ENCODE measurements at regions of chr15 and their contacts with region 1.

Region 1: DNA sequence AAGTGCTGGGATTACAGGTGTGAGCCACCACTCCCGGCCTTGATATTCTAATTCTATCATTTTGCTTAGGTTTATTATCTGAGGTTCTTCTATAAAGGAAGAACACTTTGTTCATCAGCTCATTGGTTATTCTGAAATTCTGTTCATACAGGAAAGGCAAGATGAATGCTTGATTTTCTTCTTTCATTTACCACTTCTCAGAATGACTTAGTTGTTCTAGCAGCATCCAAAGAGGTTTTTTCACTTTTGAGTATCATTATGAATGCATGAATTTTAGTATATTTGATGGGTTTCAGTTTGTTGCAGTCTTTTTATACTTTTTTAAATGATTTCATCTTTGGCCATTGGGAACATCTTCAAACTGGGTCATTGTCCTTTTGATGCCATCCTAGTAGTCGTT is 51.8 kb downstream of the RNF111 start:
- DNase-seq: no peak
- ATAC-seq: no peak
- H3K4me3 ChIP-seq: no peak overlapping the region
- H3K4me3 Mint-ChIP-seq: peak overlapping the region in 6 of 10 donors; percentile 7 to 56 (median 42)
- H3K27ac ChIP-seq: no peak overlapping the region
- H3K27ac Mint-ChIP-seq: peak overlapping the region in 3 of 9 donors; percentile 20 to 33 (median 23)
- H3K4me1 ChIP-seq: peaks cover 0 to 8% of the 10 kb centered on the region in 2 donors
- H3K4me1 Mint-ChIP-seq: peaks cover 36 to 71% (median 56%) of the 10 kb centered on the region in 7 donors
- H3K27me3 ChIP-seq: no peaks in the 10 kb centered on the region
- H3K27me3 Mint-ChIP-seq: no peaks in the 10 kb centered on the region

Region 2: DNA sequence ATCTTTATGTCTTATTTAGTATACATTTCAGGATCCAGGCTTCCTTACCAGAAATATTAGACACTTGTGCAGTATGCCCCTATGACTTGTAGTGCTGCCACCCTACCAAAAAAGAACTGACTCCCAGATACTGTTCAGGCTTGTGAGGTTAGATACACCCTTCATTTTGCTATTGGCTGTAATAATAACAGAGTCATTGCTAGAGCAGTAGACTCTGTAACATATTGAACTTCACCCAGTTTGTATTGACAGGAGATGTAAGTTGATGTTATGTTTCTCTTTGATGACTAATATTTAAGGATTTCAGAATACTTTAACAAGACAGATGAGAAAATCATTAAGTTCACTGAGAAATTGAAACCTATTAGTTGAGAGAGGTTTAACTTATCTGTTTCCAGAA is 18.9 kb before region 1 on chr15:
- CTCF ChIA-PET with region 1: no interaction called
- POLR2A ChIA-PET with region 1: no interaction called
- intact Hi-C with region 1: loop called in 1 of 2 experiments (anchors 2 kb)
- DNase-seq: no peak
- ATAC-seq: no peak
- H3K4me3 ChIP-seq: no peak overlapping the region
- H3K4me3 Mint-ChIP-seq: no peak overlapping the region
- H3K27ac ChIP-seq: no peak overlapping the region
- H3K27ac Mint-ChIP-seq: peak overlapping the region in 1 of 9 donors; percentile 13
- H3K4me1 ChIP-seq: no peaks in the 10 kb centered on the region
- H3K4me1 Mint-ChIP-seq: peaks cover 12 to 51% (median 38%) of the 10 kb centered on the region in 7 donors
- H3K27me3 ChIP-seq: no peaks in the 10 kb centered on the region
- H3K27me3 Mint-ChIP-seq: no peaks in the 10 kb centered on the region